ENCODE measurements at regions of chr2 and their contacts with region 1.

Region 1: DNA sequence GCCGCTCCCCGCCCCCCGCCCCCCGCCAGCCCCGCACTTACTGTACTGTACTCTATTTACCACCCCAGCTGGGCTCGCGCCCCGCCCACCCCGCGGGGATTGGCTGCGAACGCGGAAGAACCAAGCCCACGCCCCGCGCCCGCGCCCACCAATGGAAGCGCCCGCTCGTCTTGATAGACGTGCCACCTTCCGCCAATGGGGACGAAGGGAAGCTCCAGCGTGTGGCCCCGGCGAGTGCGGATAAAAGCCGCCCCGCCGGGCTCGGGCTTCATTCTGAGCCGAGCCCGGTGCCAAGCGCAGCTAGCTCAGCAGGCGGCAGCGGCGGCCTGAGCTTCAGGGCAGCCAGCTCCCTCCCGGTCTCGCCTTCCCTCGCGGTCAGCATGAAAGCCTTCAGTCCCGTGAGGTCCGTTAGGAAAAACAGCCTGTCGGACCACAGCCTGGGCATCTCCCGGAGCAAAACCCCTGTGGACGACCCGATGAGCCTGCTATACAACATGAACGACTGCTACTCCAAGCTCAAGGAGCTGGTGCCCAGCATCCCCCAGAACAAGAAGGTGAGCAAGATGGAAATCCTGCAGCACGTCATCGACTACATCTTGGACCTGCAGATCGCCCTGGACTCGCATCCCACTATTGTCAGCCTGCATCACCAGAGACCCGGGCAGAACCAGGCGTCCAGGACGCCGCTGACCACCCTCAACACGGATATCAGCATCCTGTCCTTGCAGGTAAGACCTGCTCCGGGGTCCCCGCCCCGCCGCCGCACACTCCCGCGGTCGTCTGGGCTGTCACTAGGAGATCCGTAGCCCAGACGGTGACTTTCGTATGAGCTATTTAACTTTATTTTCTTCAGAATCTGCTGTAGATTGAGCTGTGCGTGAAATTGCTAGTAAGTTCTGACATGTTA is at the start of gene ID2:
- H3K4me3 ChIP-seq: peak within 1 kb of the TSS; percentile 93
- H3K27ac ChIP-seq: peak within 1 kb of the TSS; percentile 97
- H3K4me1 ChIP-seq: peaks cover 6% of the 10 kb centered on the region
- CTCF ChIP-seq: no peak

Region 2: DNA sequence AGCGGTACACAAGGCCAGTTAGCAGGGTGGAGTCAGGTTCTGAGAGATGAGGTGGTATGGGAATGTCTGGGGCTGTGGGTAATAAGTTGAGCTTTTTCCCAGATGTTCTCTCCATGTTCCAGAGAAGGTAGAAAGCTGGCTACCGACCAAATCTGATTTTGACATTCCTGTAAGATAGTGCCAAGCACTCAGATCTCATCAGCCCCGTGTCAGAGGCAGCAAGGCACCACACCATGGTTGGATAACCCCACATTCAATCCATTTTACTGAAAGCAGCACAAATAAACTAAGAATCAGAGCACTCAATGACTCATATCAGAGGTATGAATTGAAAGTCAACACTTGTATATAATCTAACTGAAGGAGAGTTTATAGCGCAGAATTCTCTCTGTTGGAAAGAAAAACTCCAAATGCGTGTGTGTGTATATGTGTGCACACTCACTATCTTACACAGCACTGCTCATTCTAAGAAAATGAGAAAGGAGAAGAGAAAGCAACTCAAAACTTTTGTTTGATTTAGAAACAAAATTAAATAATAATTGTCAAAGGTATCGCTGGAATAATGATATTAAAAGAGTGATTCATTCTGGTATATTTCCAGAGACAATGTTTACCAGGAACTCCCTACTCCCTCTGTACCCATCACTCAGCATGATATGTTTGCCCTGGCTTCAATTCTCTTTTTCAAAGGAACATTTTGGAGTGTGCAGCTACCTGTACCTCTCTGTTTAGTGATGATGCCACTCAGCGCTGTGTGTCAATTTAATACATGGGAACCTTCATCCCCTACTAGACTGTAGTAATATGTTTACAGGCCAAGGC is 375.3 kb before region 1 on chr2:
- CTCF ChIA-PET with region 1: no interaction called
- POLR2A ChIA-PET with region 1: interaction called, 27 read pairs
- H3K4me3 ChIP-seq: no peak overlapping the region
- H3K27ac ChIP-seq: no peak overlapping the region
- H3K4me1 ChIP-seq: no peaks in the 10 kb centered on the region
- CTCF ChIP-seq: no peak

Region 3: DNA sequence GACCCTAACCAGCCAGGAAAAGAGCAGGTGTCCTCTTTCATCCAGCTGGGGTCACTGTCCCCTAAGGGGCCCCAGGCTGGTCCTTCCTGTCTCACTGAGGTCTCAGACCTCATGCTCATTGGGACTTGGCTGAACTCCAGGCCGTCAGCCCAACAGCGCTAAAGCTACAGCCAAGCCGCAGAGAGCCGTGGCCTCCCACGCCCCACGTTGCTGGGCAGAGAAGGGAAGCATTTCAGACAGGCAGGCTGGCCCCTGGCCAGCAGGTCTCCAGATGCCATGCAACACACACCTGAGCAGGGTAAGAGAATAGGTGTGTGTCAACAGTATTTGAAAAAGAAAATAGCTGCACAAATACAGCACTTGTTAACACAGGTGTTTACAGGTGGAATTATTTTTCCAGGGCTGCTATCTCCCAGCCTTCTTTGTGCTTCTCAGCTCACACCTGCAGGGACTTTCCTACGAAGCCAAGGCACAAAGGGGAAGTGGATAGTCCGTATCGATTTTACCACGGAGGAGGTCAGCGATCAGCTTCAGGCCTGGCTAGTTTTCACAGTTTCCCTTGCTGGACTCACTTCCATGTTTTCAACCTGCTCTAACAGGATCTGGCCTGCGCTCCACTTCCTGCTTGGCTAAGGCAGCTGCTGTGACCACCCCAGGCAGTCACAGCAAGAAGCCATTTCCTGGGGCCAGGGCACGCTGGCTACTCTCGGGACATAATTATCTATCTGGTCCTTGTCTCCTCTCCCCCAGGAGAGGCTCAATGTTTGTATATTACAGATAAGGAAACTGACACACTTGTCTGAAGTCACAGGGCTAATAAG is 156.2 kb before region 1 on chr2:
- CTCF ChIA-PET with region 1: interaction called, 5 read pairs
- POLR2A ChIA-PET with region 1: interaction called, 31 read pairs
- H3K4me3 ChIP-seq: no peak overlapping the region
- H3K27ac ChIP-seq: no peak overlapping the region
- H3K4me1 ChIP-seq: no peaks in the 10 kb centered on the region
- CTCF ChIP-seq: no peak

Region 4: DNA sequence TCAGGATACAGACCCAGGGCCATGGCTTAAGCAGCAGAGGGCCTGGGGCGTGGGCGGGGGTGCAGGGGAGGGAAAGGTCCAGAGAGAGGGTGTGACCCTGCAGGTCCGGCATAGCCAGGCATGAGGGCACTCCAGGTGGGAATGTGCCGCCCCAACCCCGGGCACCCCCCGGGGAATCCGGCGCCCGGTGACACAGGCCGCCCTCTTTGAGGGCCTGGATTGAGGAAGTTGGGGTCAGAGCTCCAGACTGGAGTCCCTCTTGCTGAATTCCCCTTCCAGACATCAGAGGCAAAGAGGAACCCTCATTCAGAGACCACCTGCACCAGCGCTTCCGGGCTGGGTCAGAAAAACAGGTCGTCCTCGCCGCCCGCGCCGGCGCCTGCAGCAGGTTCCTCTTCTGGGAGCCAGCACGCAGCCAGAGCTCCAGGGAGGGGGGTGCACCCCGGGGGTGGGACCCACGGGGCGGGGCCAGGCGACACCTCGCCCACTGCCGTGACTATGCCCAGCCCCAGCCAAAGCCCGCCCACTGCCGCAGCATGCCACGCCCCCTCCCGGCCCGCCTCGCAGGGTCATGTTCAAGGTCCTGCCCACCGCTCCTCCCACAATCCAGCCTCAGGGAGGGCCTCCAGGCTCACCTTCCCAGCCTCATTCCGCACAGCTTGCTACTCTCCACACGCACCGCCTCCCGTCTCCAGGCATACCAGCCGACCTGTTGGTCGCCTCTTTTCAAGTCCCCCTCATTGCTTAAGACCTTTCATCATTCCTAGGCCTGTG is 98.5 kb before region 1 on chr2:
- CTCF ChIA-PET with region 1: no interaction called
- POLR2A ChIA-PET with region 1: interaction called, 21 read pairs
- H3K4me3 ChIP-seq: no peak overlapping the region
- H3K27ac ChIP-seq: no peak overlapping the region
- H3K4me1 ChIP-seq: no peaks in the 10 kb centered on the region
- CTCF ChIP-seq: no peak

Region 5: GRCh38 chr2:8633735-8634313 is 48.2 kb before region 1 on chr2:
- CTCF ChIA-PET with region 1: no interaction called
- POLR2A ChIA-PET with region 1: interaction called, 13 read pairs
- H3K4me3 ChIP-seq: no peak overlapping the region
- H3K27ac ChIP-seq: no peak overlapping the region
- H3K4me1 ChIP-seq: no peaks in the 10 kb centered on the region
- CTCF ChIP-seq: no peak

Region 6: GRCh38 chr2:8693155-8693821 is 11.2 kb after region 1 on chr2:
- CTCF ChIA-PET with region 1: interaction called, 5 read pairs
- POLR2A ChIA-PET with region 1: interaction called, 11 read pairs
- H3K4me3 ChIP-seq: peak overlapping the region; percentile 18; the same call in 1 of the 2 replicates
- H3K27ac ChIP-seq: no peak overlapping the region
- H3K4me1 ChIP-seq: no peaks in the 10 kb centered on the region; the same call in 1 of the 2 replicates
- CTCF ChIP-seq: peak; percentile 68

Region 7: GRCh38 chr2:8750221-8750620 is 68.2 kb after region 1 on chr2:
- CTCF ChIA-PET with region 1: no interaction called
- POLR2A ChIA-PET with region 1: no interaction called
- H3K4me3 ChIP-seq: no peak overlapping the region
- H3K27ac ChIP-seq: no peak overlapping the region
- H3K4me1 ChIP-seq: no peaks in the 10 kb centered on the region
- CTCF ChIP-seq: no peak

Region 8: GRCh38 chr2:8849327-8849726 is 167.3 kb after region 1 on chr2:
- CTCF ChIA-PET with region 1: no interaction called
- POLR2A ChIA-PET with region 1: no interaction called
- H3K4me3 ChIP-seq: no peak overlapping the region
- H3K27ac ChIP-seq: no peak overlapping the region
- H3K4me1 ChIP-seq: peaks cover 2% of the 10 kb centered on the region; the same call in 1 of the 2 replicates
- CTCF ChIP-seq: no peak

Measured in HEK293 (cell line).